IMR-90 (cell line): ENCODE measurements at regions of chr3 and their contacts with region 1.

Region 1: DNA sequence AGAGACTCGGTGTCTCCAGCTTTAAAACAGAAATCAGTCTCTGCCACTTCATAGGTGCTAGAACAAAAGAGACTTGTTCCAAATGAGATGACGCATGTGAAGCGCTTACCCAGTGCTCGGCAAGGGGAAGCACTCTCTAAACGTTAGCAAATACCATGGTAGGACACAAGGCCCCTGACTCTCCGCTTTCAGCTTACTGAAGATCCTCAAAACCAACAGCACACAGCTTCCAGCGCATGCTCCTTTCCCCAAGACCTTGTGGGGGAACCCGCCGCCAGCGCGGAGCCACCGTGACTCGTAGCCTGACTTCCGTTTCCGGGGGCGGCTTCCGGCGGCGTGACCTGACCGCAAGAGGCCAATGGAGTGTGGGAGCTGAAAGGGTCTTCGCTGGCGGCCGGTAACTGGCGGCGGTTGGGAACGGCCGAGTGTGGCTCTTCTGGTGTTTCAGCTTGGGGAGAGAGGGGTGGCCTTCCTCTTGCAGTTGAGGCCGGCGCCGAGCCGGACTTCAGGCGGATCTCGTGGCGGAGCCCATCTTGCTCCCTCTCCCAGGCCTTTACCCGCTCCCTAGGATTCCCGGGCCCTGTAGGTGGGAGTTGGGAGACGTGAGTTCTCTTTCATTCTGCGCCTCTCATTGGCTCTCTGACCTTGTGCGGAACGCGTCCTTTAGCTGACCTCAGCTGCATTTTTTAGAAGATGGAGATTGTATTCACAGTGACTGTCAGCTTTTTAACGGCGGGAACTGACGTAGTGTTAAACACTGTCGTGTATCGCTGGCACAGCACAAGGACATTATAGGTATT is at the start of gene THUMPD3:
- DNase-seq: peak; percentile 85
- ATAC-seq: peak; percentile 94
- H3K4me3 ChIP-seq: peak within 1 kb of the TSS; percentile 67
- H3K27ac ChIP-seq: peak within 1 kb of the TSS; percentile 83
- H3K4me1 ChIP-seq: peaks cover 3% of the 10 kb centered on the region
- H3K27me3 ChIP-seq: no peaks in the 10 kb centered on the region
- CTCF ChIP-seq: no peak
- POLR2A ChIP-seq: peak; percentile 91
- RAD21 ChIP-seq: no peak
- total RNA-seq, gene THUMPD3: 43.9 and 60.5 TPM in 2 replicates

Region 2: DNA sequence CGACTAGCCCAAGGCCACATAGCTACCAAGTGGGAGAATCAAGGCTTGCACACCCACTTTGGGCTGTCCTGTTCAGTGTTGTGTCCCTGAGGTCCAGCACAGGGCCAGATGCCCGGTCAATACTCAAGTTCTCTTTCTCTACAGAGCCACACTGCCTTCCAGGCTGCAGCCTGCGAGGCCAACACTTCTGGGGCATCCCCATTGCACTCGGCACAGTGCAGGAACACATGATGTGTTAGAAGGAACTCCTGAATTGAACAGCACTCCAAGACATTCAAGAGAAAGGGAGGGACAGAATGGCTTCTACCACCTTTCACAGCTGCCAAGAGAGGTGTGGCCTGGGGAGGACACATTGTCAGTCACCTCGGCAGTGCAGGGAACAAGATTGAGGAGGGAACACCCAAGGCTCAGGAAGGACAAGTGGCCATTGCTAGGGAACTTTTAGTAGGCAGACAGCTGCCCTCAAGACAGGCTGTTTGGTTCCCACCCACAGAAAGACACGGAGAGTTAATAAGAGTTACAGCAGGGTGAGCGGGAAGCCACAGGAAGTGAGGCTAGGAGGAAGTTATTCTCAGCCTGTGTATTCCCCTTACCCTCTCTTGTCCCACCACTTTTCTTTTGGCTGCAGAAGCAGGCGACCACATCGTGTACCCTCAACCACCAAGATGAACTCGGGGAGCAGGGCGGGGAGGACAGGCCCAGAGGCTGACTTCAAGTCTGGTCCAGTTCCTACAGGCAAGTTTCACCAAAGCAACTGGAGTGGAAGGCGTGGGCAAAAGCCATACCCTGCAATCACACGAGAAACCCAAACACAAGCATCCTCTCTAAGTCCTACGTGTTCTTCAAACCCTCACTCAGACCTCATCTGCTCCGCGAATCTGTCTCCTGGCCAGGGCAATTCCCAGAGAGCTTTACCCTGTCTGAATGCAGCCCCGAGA is 182.8 kb before region 1 on chr3:
- CTCF ChIA-PET with region 1: no interaction called
- POLR2A ChIA-PET with region 1: no interaction called
- dilution Hi-C with region 1: no loop called
- in situ Hi-C with region 1: no loop called
- intact Hi-C with region 1: no loop called
- DNase-seq: no peak
- ATAC-seq: no peak
- H3K4me3 ChIP-seq: no peak overlapping the region
- H3K27ac ChIP-seq: no peak overlapping the region
- H3K4me1 ChIP-seq: no peaks in the 10 kb centered on the region
- H3K27me3 ChIP-seq: 0 out of 2 replicates have a peak, but pooled peaks cover 4% of the 10 kb centered on the region
- CTCF ChIP-seq: no peak
- POLR2A ChIP-seq: no peak
- RAD21 ChIP-seq: no peak

Region 3: GRCh38 chr3:9448643-9449042 is 85.7 kb after region 1 on chr3:
- CTCF ChIA-PET with region 1: no interaction called
- POLR2A ChIA-PET with region 1: interaction called, 14 read pairs
- dilution Hi-C with region 1: no loop called
- in situ Hi-C with region 1: no loop called
- intact Hi-C with region 1: no loop called
- DNase-seq: peak; percentile 54
- ATAC-seq: peak; percentile 82
- H3K4me3 ChIP-seq: no peak overlapping the region
- H3K27ac ChIP-seq: no peak overlapping the region
- H3K4me1 ChIP-seq: no peaks in the 10 kb centered on the region; the same call in 1 of the 2 replicates
- H3K27me3 ChIP-seq: no peaks in the 10 kb centered on the region
- CTCF ChIP-seq: no peak
- POLR2A ChIP-seq: no peak
- RAD21 ChIP-seq: no peak

Region 4: GRCh38 chr3:9649791-9650521 is 287.0 kb after region 1 on chr3:
- CTCF ChIA-PET with region 1: no interaction called
- POLR2A ChIA-PET with region 1: no interaction called
- dilution Hi-C with region 1: no loop called
- in situ Hi-C with region 1: loop called (anchors 25 kb)
- intact Hi-C with region 1: no loop called
- DNase-seq: no peak
- ATAC-seq: no peak; the same call in 1 of the 2 replicates
- H3K4me3 ChIP-seq: peak overlapping the region; percentile 99
- H3K27ac ChIP-seq: peak overlapping the region; percentile 52
- H3K4me1 ChIP-seq: peaks cover 4% of the 10 kb centered on the region
- H3K27me3 ChIP-seq: no peaks in the 10 kb centered on the region
- CTCF ChIP-seq: no peak
- POLR2A ChIP-seq: no peak
- RAD21 ChIP-seq: no peak